Mucosa of descending colon (tissue), 3 donors: ENCODE measurements at regions of chr7 and their contacts with region 1.

Region 1: DNA sequence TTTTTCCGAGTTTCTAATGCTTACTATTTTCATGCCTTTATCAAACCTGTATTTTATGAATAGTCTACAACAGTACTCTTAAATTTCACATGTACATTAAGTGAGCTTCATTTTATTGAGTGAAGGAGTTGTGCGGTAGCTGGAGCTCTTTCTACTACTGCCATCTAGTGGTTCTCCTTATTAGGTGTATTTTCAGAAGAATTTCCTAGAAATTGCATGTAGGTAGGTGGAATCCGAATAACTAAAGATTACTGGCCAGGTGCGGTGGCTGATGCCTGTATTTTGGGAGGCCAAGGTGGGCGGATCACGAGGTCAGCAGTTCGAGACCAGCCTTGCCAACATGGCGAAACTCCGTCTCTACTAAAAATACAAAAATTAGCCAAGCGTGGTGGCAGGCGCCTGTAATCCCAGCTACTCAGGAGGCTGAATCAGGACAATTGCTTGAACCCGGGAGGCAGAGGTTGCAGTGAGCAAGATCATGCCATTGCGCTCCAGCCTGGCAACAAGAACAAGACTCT is 38.3 kb downstream of the LRRC72 start:
- DNase-seq: peak in 1 of 3 donors; percentile 9
- ATAC-seq: peak; percentile 82
- H3K4me3 ChIP-seq: no peak overlapping the region
- H3K4me1 ChIP-seq: no peaks in the 10 kb centered on the region
- CTCF ChIP-seq: peak; percentile 58

Region 2: DNA sequence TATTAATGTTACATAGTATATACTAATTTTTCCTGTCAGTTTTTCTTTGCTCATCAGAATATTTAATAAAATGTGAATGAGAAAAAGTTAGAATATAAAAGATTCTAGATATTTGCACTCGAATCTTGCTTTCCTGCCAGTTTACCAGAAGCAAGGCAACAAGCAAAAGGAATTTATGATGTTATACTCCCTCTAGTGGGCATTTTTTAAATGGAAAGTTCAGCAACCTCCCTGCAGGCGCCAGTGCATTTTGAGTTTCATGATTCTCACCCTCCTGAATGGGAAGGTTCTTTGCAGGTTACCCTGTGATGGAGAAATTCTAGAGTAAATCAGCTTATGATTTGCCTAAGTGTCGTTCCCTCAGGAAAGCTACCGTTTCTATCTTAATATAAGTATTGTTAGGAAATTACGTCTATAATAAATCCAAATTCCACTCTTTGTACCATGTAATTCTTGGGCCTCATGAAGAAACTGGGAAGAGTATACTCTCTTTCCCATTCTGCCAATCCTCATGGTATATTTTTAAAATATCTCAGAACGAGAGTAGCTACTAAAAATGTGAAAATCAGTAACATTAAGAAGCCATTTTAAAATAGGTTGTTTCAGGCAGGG is 493.6 kb before region 1 on chr7:
- intact Hi-C with region 1: loop called (anchors 5 to 10 kb)
- DNase-seq: no peak
- ATAC-seq: peak; percentile 49
- H3K4me3 ChIP-seq: no peak overlapping the region
- H3K4me1 ChIP-seq: no peaks in the 10 kb centered on the region
- CTCF ChIP-seq: peak; percentile 36

Region 3: GRCh38 chr7:16078076-16078952 is 486.7 kb before region 1 on chr7:
- intact Hi-C with region 1: loop called (anchors 5 to 10 kb)
- DNase-seq: peak in 1 of 3 donors; percentile 79
- ATAC-seq: peak; percentile 65
- H3K4me3 ChIP-seq: no peak overlapping the region
- H3K4me1 ChIP-seq: no peaks in the 10 kb centered on the region
- CTCF ChIP-seq: no peak

Region 4: GRCh38 chr7:16431646-16432424 is 133.1 kb before region 1 on chr7:
- intact Hi-C with region 1: loop called in 1 of 2 experiments (anchors 5 kb)
- DNase-seq: peak in 1 of 3 donors; percentile 78
- ATAC-seq: peak; percentile 72
- H3K4me3 ChIP-seq: no peak overlapping the region
- H3K4me1 ChIP-seq: no peaks in the 10 kb centered on the region
- CTCF ChIP-seq: peak; percentile 20

Region 5: GRCh38 chr7:16999541-17000267 is 434.7 kb after region 1 on chr7:
- intact Hi-C with region 1: no loop called
- DNase-seq: no peak
- ATAC-seq: peak; percentile 24
- H3K4me3 ChIP-seq: no peak overlapping the region
- H3K4me1 ChIP-seq: no peaks in the 10 kb centered on the region
- CTCF ChIP-seq: no peak